Activated B cell treated with CpG ODN at 0.5 μM for 24 hours (primary cell): ENCODE measurements at regions of chr7 and their contacts with region 1.

Region 1: GRCh38 chr7:71733107-71733870 is 601.3 kb downstream of the GALNT17 start:
- DNase-seq: peak; percentile 40
- ATAC-seq: no peak
- H3K4me3 Mint-ChIP-seq: no peak overlapping the region
- H3K27ac Mint-ChIP-seq: no peak overlapping the region
- H3K4me1 Mint-ChIP-seq: no peaks in the 10 kb centered on the region
- H3K27me3 Mint-ChIP-seq: no peaks in the 10 kb centered on the region
- CTCF ChIP-seq: no peak

Region 2: DNA sequence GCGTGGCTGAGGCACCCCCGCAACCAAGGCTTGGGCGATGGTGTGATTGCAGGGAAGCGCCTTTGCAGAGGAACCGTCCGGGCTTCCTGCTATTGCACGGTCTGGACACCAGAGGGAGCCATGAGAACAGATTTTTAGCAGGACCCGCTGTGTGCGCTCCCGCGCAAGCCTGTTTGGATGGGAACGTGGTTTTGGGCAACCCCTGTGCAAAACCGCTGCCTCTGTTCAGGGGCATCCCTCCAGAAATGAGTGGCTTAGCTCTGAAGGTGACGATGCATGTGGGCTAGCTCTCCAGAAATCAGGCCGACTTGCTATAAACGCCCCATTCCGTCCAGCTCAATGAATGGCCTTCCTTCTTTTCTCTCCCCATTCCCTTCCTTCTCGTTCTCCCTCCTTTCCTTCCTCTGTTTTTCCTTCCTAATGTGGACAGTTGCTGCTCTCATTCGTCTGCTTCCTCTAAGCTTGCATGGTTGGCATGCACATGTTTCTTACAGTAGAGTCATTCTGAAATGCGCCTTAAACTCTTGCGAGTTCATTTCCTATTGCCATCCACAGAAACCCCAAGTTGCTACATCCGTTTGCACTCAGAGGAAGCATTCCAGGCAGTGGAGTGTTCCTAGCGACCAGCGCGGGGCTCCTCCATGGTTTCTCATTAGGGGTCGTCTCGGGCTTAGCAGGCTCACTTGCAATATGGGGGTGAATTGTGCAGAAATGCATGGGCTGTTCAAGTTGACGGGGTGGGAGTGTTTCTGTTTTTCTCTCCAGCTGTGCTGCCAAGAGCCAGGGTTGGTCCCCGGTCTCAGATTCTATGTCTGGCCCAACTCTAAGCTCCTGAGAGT is 903.8 kb before region 1 on chr7:
- CTCF ChIA-PET with region 1: interaction called, 17 read pairs
- POLR2A ChIA-PET with region 1: no interaction called
- intact Hi-C with region 1: loop called (anchors 1 kb)
- DNase-seq: peak; percentile 42
- ATAC-seq: peak; percentile 61
- H3K4me3 Mint-ChIP-seq: no peak overlapping the region
- H3K27ac Mint-ChIP-seq: no peak overlapping the region
- H3K4me1 Mint-ChIP-seq: peaks cover 13% of the 10 kb centered on the region
- H3K27me3 Mint-ChIP-seq: peaks cover 17% of the 10 kb centered on the region
- CTCF ChIP-seq: peak; percentile 46

Region 3: GRCh38 chr7:71835056-71835455 is 101.8 kb after region 1 on chr7:
- CTCF ChIA-PET with region 1: no interaction called
- POLR2A ChIA-PET with region 1: no interaction called
- intact Hi-C with region 1: no loop called
- DNase-seq: no peak
- ATAC-seq: no peak
- H3K4me3 Mint-ChIP-seq: no peak overlapping the region
- H3K27ac Mint-ChIP-seq: no peak overlapping the region
- H3K4me1 Mint-ChIP-seq: no peaks in the 10 kb centered on the region
- H3K27me3 Mint-ChIP-seq: no peaks in the 10 kb centered on the region
- CTCF ChIP-seq: no peak